ENCODE measurements at regions of chr16 and their contacts with region 1.

Region 1: GRCh38 chr16:15704545-15704987 is 54.5 kb downstream of the NDE1 start:
- DNase-seq: peak; percentile 58
- H3K4me3 Mint-ChIP-seq: no peak overlapping the region
- H3K27ac Mint-ChIP-seq: no peak overlapping the region
- H3K4me1 Mint-ChIP-seq: peaks cover 11% of the 10 kb centered on the region
- H3K27me3 Mint-ChIP-seq: no peaks in the 10 kb centered on the region

Region 2: GRCh38 chr16:15643048-15643945 is 61.3 kb before region 1 on chr16 and contains the start of gene MARF1:
- intact Hi-C with region 1: loop called (anchors 5 kb)
- DNase-seq: peak; percentile 98
- H3K4me3 Mint-ChIP-seq: peak within 1 kb of the TSS; percentile 93
- H3K27ac Mint-ChIP-seq: peak within 1 kb of the TSS; percentile 98
- H3K4me1 Mint-ChIP-seq: peaks cover 42% of the 10 kb centered on the region
- H3K27me3 Mint-ChIP-seq: no peaks in the 10 kb centered on the region
- total RNA-seq, gene MARF1: 49.9 and 56.4 TPM in 2 replicates